ENCODE measurements at regions of chr11 and their contacts with region 1.

Region 1: GRCh38 chr11:86592659-86593451 is 79.6 kb downstream of the ME3 start:
- DNase-seq: peak; percentile 98
- H3K4me3 Mint-ChIP-seq: no peak overlapping the region
- H3K27ac Mint-ChIP-seq: peak overlapping the region; percentile 86
- H3K4me1 Mint-ChIP-seq: peaks cover 70% of the 10 kb centered on the region
- H3K27me3 Mint-ChIP-seq: no peaks in the 10 kb centered on the region

Region 2: GRCh38 chr11:85826116-85826855 is 766.6 kb before region 1 on chr11:
- CTCF ChIA-PET with region 1: no interaction called
- intact Hi-C with region 1: loop called (anchors 2 kb)
- DNase-seq: peak; percentile 51
- H3K4me3 Mint-ChIP-seq: peak overlapping the region; percentile 28
- H3K27ac Mint-ChIP-seq: peak overlapping the region; percentile 20
- H3K4me1 Mint-ChIP-seq: peaks cover 57% of the 10 kb centered on the region
- H3K27me3 Mint-ChIP-seq: no peaks in the 10 kb centered on the region

Region 3: DNA sequence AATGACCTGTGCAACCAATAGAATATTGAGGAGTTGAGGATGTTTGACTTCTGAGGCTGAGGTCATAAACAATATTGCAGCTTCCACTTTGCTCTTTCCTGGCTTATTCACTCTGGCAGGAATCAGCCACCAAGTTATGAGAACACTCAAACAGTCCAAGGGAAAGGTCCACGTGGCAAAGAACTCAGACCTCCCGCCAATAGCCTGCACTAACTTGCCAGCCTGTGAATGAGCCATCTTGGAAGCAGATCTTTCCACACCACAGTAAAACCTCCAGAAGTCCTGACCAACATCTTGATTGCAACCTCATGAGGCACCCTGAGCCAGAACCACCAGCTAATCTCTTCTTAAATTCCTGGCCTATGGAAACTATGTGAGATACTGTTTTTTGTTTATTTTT is 501.3 kb before region 1 on chr11:
- CTCF ChIA-PET with region 1: no interaction called
- intact Hi-C with region 1: no loop called
- DNase-seq: no peak
- H3K4me3 Mint-ChIP-seq: no peak overlapping the region
- H3K27ac Mint-ChIP-seq: no peak overlapping the region
- H3K4me1 Mint-ChIP-seq: no peaks in the 10 kb centered on the region
- H3K27me3 Mint-ChIP-seq: peaks cover 11% of the 10 kb centered on the region

Region 4: GRCh38 chr11:86124834-86125233 is 468.0 kb before region 1 on chr11:
- CTCF ChIA-PET with region 1: no interaction called
- intact Hi-C with region 1: no loop called
- DNase-seq: peak; percentile 13
- H3K4me3 Mint-ChIP-seq: no peak overlapping the region
- H3K27ac Mint-ChIP-seq: peak overlapping the region; percentile 2
- H3K4me1 Mint-ChIP-seq: peaks cover 23% of the 10 kb centered on the region
- H3K27me3 Mint-ChIP-seq: peaks cover 11% of the 10 kb centered on the region

Region 5: DNA sequence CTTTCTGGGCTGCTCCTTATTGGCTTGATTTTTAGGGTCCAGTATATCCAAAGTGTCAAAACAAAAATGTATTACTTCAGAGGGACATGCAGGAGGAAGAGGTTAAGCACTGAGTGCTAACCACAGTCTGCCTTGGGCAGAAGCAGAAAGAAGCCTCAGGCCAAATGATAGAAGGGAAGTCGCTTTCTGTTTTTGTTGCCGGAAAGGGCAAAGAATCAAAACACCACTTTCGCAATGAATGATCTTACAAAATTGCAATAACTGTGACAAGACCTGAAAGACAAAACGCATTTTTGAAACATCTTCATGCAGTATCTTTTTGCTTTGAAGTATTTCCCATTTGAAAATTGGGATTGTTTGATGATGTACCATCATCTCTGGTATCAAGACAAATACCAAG is 453.9 kb before region 1 on chr11:
- CTCF ChIA-PET with region 1: no interaction called
- intact Hi-C with region 1: loop called (anchors 5 kb)
- DNase-seq: peak; percentile 48
- H3K4me3 Mint-ChIP-seq: no peak overlapping the region
- H3K27ac Mint-ChIP-seq: peak overlapping the region; percentile 25
- H3K4me1 Mint-ChIP-seq: peaks cover 13% of the 10 kb centered on the region
- H3K27me3 Mint-ChIP-seq: no peaks in the 10 kb centered on the region

Region 6: GRCh38 chr11:86302100-86302793 is 290.6 kb before region 1 on chr11 and contains the start of gene HIKESHI:
- CTCF ChIA-PET with region 1: no interaction called
- intact Hi-C with region 1: loop called (anchors 1 kb)
- DNase-seq: peak; percentile 99
- H3K4me3 Mint-ChIP-seq: peak within 1 kb of the TSS; percentile 99
- H3K27ac Mint-ChIP-seq: peak within 1 kb of the TSS; percentile 94
- H3K4me1 Mint-ChIP-seq: peaks cover 26% of the 10 kb centered on the region
- H3K27me3 Mint-ChIP-seq: no peaks in the 10 kb centered on the region
- total RNA-seq, gene HIKESHI: 40.4 to 41.9 TPM

Region 7: GRCh38 chr11:86637988-86638387 is 45.1 kb after region 1 on chr11:
- CTCF ChIA-PET with region 1: no interaction called
- intact Hi-C with region 1: loop called (anchors 2 kb)
- DNase-seq: peak; percentile 18
- H3K4me3 Mint-ChIP-seq: no peak overlapping the region
- H3K27ac Mint-ChIP-seq: no peak overlapping the region
- H3K4me1 Mint-ChIP-seq: peaks cover 33% of the 10 kb centered on the region
- H3K27me3 Mint-ChIP-seq: no peaks in the 10 kb centered on the region

Region 8: DNA sequence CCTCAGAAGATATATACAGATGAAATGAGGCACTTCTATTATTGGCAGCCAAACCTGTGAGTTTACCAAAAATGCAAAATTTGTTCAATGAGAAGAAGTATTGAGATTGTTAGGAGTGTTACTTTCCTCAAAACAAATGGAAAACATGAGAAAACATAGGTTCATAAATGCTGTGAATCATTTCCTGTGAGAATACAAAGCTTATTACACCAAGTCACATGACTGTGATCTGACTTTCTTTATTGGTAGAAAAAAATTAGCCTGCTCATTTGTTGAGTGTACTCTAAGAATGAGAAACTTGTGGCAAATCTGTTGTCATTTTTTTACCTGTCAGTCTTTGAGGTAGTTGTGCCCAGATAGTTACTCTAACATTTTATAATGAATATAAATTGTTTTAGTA is 660.0 kb after region 1 on chr11:
- CTCF ChIA-PET with region 1: no interaction called
- intact Hi-C with region 1: loop called (anchors 2 kb)
- DNase-seq: no peak
- H3K4me3 Mint-ChIP-seq: no peak overlapping the region
- H3K27ac Mint-ChIP-seq: peak overlapping the region; percentile 14
- H3K4me1 Mint-ChIP-seq: peaks cover 29% of the 10 kb centered on the region
- H3K27me3 Mint-ChIP-seq: no peaks in the 10 kb centered on the region